ENCODE measurements at regions of chr3 and their contacts with region 1.

Region 1: GRCh38 chr3:49839193-49839809 is 17.1 kb downstream of the TRAIP start:
- DNase-seq: peak; percentile 74
- H3K4me3 ChIP-seq: no peak overlapping the region; a peak in 1 of 4 replicates
- H3K27ac ChIP-seq: peak overlapping the region in 1 of 2 experiments; percentile 93; a peak in 2 of 4 replicates
- H3K4me1 ChIP-seq: peaks cover 0 to 48% of the 10 kb centered on the region in 2 experiments; a peak in 1 of 4 replicates
- H3K27me3 ChIP-seq: no peaks in the 10 kb centered on the region
- CTCF ChIP-seq: peak; percentile 97
- EP300 ChIP-seq: no peak
- RAD21 ChIP-seq: peak; percentile 88

Region 2: DNA sequence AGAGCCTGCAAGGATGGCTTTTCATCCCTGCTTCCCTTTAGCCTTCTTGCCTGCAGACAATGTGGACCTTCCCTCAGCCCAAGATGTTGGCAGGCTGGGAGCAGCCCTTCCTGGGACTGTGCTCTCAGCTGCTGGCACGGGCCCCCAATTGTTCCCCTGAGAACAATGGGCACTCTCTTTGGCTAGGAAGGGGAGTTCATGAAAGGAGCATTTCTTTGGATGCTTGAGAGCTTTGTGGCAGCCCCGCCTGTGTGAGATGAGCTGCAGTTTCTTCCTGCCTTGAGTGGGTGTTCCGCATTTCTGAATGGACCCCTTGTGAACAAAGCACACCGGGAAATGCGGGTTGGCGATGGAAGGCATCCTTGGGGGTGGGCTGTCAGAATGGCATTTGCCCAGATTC is 320.0 kb before region 1 on chr3:
- CTCF ChIA-PET with region 1: no interaction called
- POLR2A ChIA-PET with region 1: no interaction called
- DNase-seq: no peak
- H3K4me3 ChIP-seq: no peak overlapping the region
- H3K27ac ChIP-seq: no peak overlapping the region
- H3K4me1 ChIP-seq: peaks cover 0 to 4% of the 10 kb centered on the region in 2 experiments; a peak in 1 of 4 replicates
- H3K27me3 ChIP-seq: no peaks in the 10 kb centered on the region
- CTCF ChIP-seq: no peak
- EP300 ChIP-seq: no peak
- RAD21 ChIP-seq: no peak

Region 3: GRCh38 chr3:49703443-49703927 is 135.8 kb before region 1 on chr3:
- CTCF ChIA-PET with region 1: interaction called, 10 read pairs
- POLR2A ChIA-PET with region 1: no interaction called
- DNase-seq: peak; percentile 92
- H3K4me3 ChIP-seq: no peak overlapping the region
- H3K27ac ChIP-seq: no peak overlapping the region
- H3K4me1 ChIP-seq: no peaks in the 10 kb centered on the region
- H3K27me3 ChIP-seq: no peaks in the 10 kb centered on the region
- CTCF ChIP-seq: peak; percentile 70
- EP300 ChIP-seq: no peak
- RAD21 ChIP-seq: peak; percentile 77

Region 4: DNA sequence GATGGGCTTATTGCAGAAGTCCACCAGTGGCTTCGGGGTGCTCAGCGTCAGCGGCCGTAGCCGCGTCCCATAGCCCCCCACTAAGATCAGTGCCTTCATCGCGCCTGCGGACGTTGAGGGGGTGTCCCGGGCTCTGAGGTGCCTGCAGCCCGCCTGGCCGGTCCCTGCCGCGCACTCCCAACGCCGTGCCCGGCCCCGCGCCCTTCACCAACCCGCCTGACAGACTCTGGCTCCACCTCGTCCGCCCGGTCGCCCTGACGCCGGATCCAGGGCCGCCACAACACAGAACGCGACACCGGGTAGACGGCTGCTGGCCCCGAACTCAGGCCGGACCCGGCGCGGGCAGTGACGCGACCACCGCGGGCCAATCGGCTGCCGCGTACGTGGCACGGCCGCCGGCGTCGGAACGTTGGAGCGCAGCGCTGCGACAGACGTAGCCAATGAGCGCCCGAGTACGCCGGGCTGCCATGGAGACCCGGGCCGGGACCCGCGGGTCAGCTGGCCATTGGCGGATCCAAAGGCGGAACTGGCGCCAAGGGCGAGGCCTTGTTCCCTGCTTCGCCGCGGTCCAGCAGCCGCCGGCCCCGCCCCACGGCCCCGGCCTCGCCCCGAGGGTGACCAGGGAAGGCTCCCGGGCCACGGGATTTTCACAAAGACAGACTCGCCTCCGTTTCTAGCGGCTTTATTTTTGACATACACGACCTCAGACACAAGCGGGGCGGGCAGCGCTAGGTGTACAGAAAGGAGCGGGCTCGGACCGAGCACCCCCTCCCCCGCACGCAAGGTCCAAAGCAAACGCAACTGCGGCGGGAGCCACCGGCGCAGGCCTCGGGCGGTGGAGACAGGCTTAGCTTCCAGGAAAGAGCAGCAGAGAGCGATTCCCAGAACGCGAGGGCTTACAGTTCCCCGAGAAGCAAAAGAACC is 115.4 kb before region 1 on chr3 and contains the start of gene GMPPB:
- CTCF ChIA-PET with region 1: interaction called, 16 read pairs
- POLR2A ChIA-PET with region 1: interaction called, 8 read pairs
- DNase-seq: peak; percentile 98
- H3K4me3 ChIP-seq: peak within 1 kb of the TSS; percentile 98 to 99
- H3K27ac ChIP-seq: peak within 1 kb of the TSS; percentile 81 to 87
- H3K4me1 ChIP-seq: peaks cover 8 to 23% of the 10 kb centered on the region in 2 experiments; a peak in 2 of 4 replicates
- H3K27me3 ChIP-seq: no peaks in the 10 kb centered on the region
- CTCF ChIP-seq: no peak
- EP300 ChIP-seq: 0 out of 4 replicates have a peak, but pooled peaks of 1 of the 2 experiments have one; percentile 15
- RAD21 ChIP-seq: no peak
- polyA plus RNA-seq, gene GMPPB: 25.1 and 28.3 TPM in 2 replicates

Region 5: GRCh38 chr3:49734752-49735151 is 104.5 kb before region 1 on chr3:
- CTCF ChIA-PET with region 1: no interaction called
- POLR2A ChIA-PET with region 1: no interaction called
- DNase-seq: no peak
- H3K4me3 ChIP-seq: no peak overlapping the region
- H3K27ac ChIP-seq: no peak overlapping the region
- H3K4me1 ChIP-seq: no peaks in the 10 kb centered on the region
- H3K27me3 ChIP-seq: no peaks in the 10 kb centered on the region
- CTCF ChIP-seq: no peak
- EP300 ChIP-seq: no peak
- RAD21 ChIP-seq: no peak

Region 6: GRCh38 chr3:49826016-49826415 is 13.3 kb before region 1 on chr3:
- CTCF ChIA-PET with region 1: interaction called, 45 read pairs
- POLR2A ChIA-PET with region 1: no interaction called
- DNase-seq: no peak
- H3K4me3 ChIP-seq: no peak overlapping the region
- H3K27ac ChIP-seq: no peak overlapping the region
- H3K4me1 ChIP-seq: no peaks in the 10 kb centered on the region
- H3K27me3 ChIP-seq: no peaks in the 10 kb centered on the region
- CTCF ChIP-seq: no peak
- EP300 ChIP-seq: no peak
- RAD21 ChIP-seq: no peak

Region 7: DNA sequence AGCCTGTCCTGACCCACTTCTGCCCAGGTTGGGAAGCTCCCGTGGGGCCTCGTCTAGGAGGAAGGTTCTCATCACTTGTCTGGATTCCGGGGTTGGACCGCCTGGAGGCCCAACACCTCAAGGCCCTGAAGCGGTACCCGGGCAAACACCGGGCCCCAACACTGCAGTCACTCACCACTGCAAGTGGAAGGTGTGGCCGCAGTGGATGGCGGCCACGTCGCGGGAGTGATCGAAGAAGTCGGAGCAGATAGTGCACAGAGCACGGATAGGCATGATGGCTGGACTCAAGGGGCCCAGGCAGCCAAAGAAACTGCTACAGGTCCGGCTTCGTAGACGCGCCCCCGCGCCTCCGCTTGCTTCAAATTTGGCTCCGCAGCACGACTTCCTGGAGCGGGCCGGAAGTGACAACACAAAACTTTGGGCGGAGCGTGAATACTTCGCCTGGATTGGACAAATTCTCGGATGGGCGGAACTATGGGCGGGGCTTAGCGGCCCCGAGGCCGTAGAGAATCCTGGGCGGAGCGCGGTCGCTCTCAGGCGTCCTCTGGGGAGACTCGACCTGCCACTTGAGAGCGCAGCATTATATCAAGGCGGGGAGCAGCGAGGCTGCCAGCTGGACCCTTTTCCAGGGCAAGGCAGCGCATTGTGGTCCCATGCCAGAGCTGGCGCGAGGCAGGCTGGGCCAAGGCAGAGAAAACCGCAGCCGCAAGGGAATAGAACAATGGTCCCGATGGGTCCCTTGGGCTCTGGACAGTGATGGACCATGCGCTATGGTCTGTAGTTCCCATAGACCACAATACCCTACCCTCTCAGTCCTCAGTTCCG is 17.1 kb after region 1 on chr3 and contains the start of gene TRAIP:
- CTCF ChIA-PET with region 1: interaction called, 22 read pairs
- POLR2A ChIA-PET with region 1: no interaction called
- DNase-seq: peak; percentile 98
- H3K4me3 ChIP-seq: peak within 1 kb of the TSS; percentile 71 to 98
- H3K27ac ChIP-seq: peak within 1 kb of the TSS; percentile 38 to 85; a peak in 3 of 4 replicates
- H3K4me1 ChIP-seq: peaks cover 0 to 14% of the 10 kb centered on the region in 2 experiments; a peak in 1 of 4 replicates
- H3K27me3 ChIP-seq: no peaks in the 10 kb centered on the region
- CTCF ChIP-seq: no peak
- EP300 ChIP-seq: no peak
- RAD21 ChIP-seq: peak; percentile 40
- polyA plus RNA-seq, gene TRAIP: 8.1 and 12.8 TPM in 2 replicates

Region 8: DNA sequence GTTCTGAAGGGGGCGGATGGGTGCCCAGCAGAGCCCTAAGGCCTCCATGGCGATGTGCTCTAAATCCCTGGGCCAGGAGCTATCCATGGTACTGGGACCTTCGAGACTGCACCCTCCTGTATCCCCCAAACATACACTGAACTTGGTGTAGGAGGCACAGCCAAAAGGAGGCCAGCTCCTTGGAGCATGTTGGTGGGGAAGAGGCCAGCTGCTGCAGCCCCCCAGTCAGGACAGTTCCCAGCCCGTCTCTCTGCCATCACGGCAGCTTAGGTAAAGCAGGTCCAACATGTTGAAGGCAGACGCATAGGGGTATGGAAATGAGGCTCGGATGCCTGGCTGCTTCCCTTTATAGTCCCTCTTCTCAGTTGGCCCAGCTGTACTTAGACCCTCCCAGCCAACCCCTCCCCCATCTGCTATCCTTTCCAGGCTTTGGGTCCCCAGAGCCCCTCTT is 28.6 kb after region 1 on chr3:
- CTCF ChIA-PET with region 1: interaction called, 42 read pairs
- POLR2A ChIA-PET with region 1: no interaction called
- DNase-seq: no peak
- H3K4me3 ChIP-seq: no peak overlapping the region
- H3K27ac ChIP-seq: no peak overlapping the region
- H3K4me1 ChIP-seq: peaks cover 0 to 35% of the 10 kb centered on the region in 2 experiments; a peak in 1 of 4 replicates
- H3K27me3 ChIP-seq: peaks cover 41% of the 10 kb centered on the region
- CTCF ChIP-seq: no peak
- EP300 ChIP-seq: no peak
- RAD21 ChIP-seq: no peak

Region 9: GRCh38 chr3:49899815-49900214 is 60.5 kb after region 1 on chr3:
- CTCF ChIA-PET with region 1: interaction called, 26 read pairs
- POLR2A ChIA-PET with region 1: no interaction called
- DNase-seq: peak; percentile 58
- H3K4me3 ChIP-seq: no peak overlapping the region
- H3K27ac ChIP-seq: no peak overlapping the region
- H3K4me1 ChIP-seq: peaks cover 0 to 6% of the 10 kb centered on the region in 2 experiments; a peak in 1 of 4 replicates
- H3K27me3 ChIP-seq: no peaks in the 10 kb centered on the region
- CTCF ChIP-seq: peak; percentile 27; the same call in 1 of the 2 replicates
- EP300 ChIP-seq: no peak
- RAD21 ChIP-seq: peak; percentile 60